CD8-positive, alpha-beta T cell (primary cell): ENCODE measurements at regions of chr2 and their contacts with region 1.

Region 1: GRCh38 chr2:179031731-179032408 is 18.1 kb downstream of the CCDC141 start:
- DNase-seq: peak in 6 of 9 experiments; percentile 5 to 71 (median 35)
- ATAC-seq: peak; percentile 88
- H3K4me3 ChIP-seq: peak overlapping the region; percentile 25 to 34
- H3K4me3 Mint-ChIP-seq: peak overlapping the region; percentile 82
- H3K27ac ChIP-seq: peak overlapping the region; percentile 59 to 75
- H3K27ac Mint-ChIP-seq: peak overlapping the region; percentile 98
- H3K4me1 ChIP-seq: peaks cover 13% of the 10 kb centered on the region
- H3K4me1 Mint-ChIP-seq: peaks cover 38% of the 10 kb centered on the region
- H3K27me3 ChIP-seq: no peaks in the 10 kb centered on the region
- H3K27me3 Mint-ChIP-seq: no peaks in the 10 kb centered on the region
- CTCF ChIP-seq: no peak

Region 2: DNA sequence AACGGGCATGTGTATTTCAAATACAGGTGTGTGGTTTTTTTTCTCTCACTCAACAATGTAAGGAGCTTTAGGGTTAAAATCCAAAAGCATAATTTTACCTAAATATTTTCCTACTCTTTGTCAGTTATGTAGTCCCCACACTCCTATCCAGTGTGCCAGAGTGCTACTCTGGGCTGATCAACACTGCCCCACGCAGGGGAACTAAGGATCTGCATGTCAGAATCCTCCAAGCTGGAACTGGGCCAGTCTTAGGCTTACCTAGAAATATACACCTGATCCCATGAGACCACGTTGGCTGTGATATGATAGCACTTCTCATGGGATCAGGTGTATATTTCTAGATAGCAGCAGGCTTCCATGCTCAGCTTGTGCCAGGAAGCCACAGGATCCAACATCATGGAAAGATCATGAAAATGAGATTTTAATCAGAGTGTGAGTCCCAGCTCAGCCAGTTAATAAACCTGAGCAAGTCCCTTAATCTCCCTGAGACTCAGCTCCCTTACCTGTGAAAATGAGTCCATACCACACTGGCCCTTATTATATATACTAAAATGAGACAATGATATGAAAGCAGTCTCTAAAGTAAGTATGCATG is 11.6 kb before region 1 on chr2:
- CTCF ChIA-PET with region 1: interaction called, 8 read pairs
- POLR2A ChIA-PET with region 1: interaction called, 20 read pairs
- intact Hi-C with region 1: no loop called
- DNase-seq: peak in 6 of 9 experiments; percentile 31 to 52 (median 42)
- ATAC-seq: peak; percentile 94
- H3K4me3 ChIP-seq: no peak overlapping the region
- H3K4me3 Mint-ChIP-seq: no peak overlapping the region
- H3K27ac ChIP-seq: no peak overlapping the region
- H3K27ac Mint-ChIP-seq: no peak overlapping the region
- H3K4me1 ChIP-seq: peaks cover 16% of the 10 kb centered on the region
- H3K4me1 Mint-ChIP-seq: peaks cover 36% of the 10 kb centered on the region
- H3K27me3 ChIP-seq: no peaks in the 10 kb centered on the region
- H3K27me3 Mint-ChIP-seq: no peaks in the 10 kb centered on the region
- CTCF ChIP-seq: peak; percentile 31

Region 3: GRCh38 chr2:179049546-179050311 is 17.9 kb after region 1 on chr2 and contains the start of gene CCDC141:
- CTCF ChIA-PET with region 1: interaction called, 3 read pairs
- POLR2A ChIA-PET with region 1: interaction called, 26 read pairs
- intact Hi-C with region 1: loop called in 1 of 2 experiments (anchors 2 kb)
- DNase-seq: peak in 6 of 9 experiments; percentile 5 to 65 (median 27)
- ATAC-seq: peak; percentile 74
- H3K4me3 ChIP-seq: peak within 1 kb of the TSS; percentile 49 to 67
- H3K4me3 Mint-ChIP-seq: peak within 1 kb of the TSS; percentile 95
- H3K27ac ChIP-seq: peak within 1 kb of the TSS; percentile 57 to 67
- H3K27ac Mint-ChIP-seq: peak within 1 kb of the TSS; percentile 97
- H3K4me1 ChIP-seq: peaks cover 18% of the 10 kb centered on the region
- H3K4me1 Mint-ChIP-seq: peaks cover 46% of the 10 kb centered on the region
- H3K27me3 ChIP-seq: no peaks in the 10 kb centered on the region
- H3K27me3 Mint-ChIP-seq: no peaks in the 10 kb centered on the region
- CTCF ChIP-seq: no peak
- total RNA-seq, gene CCDC141: 28.2 to 31.3 TPM

Region 4: GRCh38 chr2:179106676-179107428 is 75.0 kb after region 1 on chr2:
- CTCF ChIA-PET with region 1: no interaction called
- POLR2A ChIA-PET with region 1: no interaction called
- intact Hi-C with region 1: loop called in 1 of 2 experiments (anchors 5 kb)
- DNase-seq: peak in 1 of 9 experiments; percentile 11
- ATAC-seq: no peak
- H3K4me3 ChIP-seq: no peak overlapping the region
- H3K4me3 Mint-ChIP-seq: no peak overlapping the region
- H3K27ac ChIP-seq: no peak overlapping the region
- H3K27ac Mint-ChIP-seq: no peak overlapping the region
- H3K4me1 ChIP-seq: peaks cover 21% of the 10 kb centered on the region
- H3K4me1 Mint-ChIP-seq: peaks cover 25% of the 10 kb centered on the region
- H3K27me3 ChIP-seq: no peaks in the 10 kb centered on the region
- H3K27me3 Mint-ChIP-seq: no peaks in the 10 kb centered on the region
- CTCF ChIP-seq: no peak

Region 5: DNA sequence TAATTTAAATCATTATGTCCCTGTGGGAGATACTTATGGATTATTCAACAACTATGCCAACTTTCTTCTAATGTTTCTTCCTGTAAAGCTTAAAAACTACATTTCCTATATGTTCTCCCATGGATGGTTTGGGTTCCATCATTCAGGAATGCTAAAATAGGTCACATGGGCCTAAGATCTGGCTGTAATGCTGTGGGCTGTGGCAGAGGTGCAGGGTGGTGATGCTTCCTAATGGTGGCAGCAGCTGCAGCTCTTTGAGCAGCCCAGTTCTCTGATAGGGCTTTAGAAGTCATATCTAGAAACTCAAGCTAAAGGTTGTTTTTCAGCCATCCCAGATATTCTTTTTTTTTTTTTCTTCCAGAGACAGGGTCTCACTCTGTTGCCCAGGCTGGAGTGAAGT is 563.4 kb after region 1 on chr2:
- CTCF ChIA-PET with region 1: no interaction called
- POLR2A ChIA-PET with region 1: no interaction called
- intact Hi-C with region 1: no loop called
- DNase-seq: no peak
- ATAC-seq: no peak
- H3K4me3 ChIP-seq: no peak overlapping the region
- H3K4me3 Mint-ChIP-seq: no peak overlapping the region
- H3K27ac ChIP-seq: no peak overlapping the region
- H3K27ac Mint-ChIP-seq: no peak overlapping the region
- H3K4me1 ChIP-seq: no peaks in the 10 kb centered on the region
- H3K4me1 Mint-ChIP-seq: no peaks in the 10 kb centered on the region
- H3K27me3 ChIP-seq: no peaks in the 10 kb centered on the region
- H3K27me3 Mint-ChIP-seq: no peaks in the 10 kb centered on the region
- CTCF ChIP-seq: no peak